ENCODE measurements at regions of chr5 and their contacts with region 1.

Region 1: DNA sequence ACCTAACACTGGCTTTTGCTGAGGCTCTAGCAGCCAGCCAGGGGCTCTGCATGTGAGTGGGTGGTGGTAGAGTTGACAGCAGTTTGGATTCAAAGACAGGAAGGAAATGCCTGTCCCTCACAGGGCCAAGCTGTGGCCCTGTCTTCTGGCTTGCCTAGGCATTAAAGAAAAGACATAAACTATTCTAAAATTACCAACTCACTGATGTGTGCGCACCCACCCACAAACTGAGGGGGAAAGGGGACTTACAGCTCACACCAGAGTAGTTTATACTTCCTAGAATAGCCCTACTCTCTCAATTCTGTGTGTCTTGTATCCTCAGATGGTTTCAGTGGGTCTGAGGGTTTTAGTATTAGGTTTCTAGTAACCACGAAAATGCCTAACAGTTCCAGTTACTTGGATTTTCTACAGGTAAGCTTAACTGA is 18.3 kb upstream of the IL13 start:
- DNase-seq: peak; percentile 52
- H3K4me3 Mint-ChIP-seq: no peak overlapping the region
- H3K27ac Mint-ChIP-seq: peak overlapping the region; percentile 18
- H3K4me1 Mint-ChIP-seq: peaks cover 76% of the 10 kb centered on the region
- H3K27me3 Mint-ChIP-seq: no peaks in the 10 kb centered on the region

Region 2: DNA sequence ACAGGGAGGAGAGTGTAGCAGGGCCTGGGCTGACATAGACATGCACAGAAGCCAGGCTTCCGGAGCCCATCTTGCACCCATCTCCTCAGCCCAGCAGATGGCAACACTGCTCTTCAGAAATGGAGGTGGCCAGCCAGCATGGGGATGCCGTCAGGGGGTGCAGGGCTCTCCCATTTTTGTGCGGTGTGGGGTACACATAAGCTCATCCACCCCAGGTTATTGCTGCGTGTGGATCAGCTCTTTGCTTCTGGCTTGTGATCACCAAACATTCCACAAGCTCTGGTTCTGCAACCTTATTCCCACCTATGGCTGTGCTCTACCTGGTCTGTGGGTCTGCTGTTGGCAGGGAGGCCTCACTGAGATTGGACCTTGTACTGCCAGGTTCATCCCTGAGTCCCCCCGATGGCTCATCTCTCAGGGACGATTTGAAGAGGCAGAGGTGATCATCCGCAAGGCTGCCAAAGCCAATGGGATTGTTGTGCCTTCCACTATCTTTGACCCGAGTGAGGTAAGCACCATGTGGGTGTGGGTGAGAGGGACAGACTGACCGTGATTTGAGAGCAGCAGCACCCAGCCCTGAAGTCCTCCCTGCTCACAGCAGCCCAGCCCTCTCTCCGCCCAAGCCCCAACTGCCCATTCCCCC is 253.0 kb before region 1 on chr5:
- CTCF ChIA-PET with region 1: interaction called, 4 read pairs
- POLR2A ChIA-PET with region 1: no interaction called
- intact Hi-C with region 1: loop called (anchors 5 kb)
- DNase-seq: peak; percentile 87
- H3K4me3 Mint-ChIP-seq: no peak overlapping the region
- H3K27ac Mint-ChIP-seq: peak overlapping the region; percentile 14
- H3K4me1 Mint-ChIP-seq: peaks cover 42% of the 10 kb centered on the region
- H3K27me3 Mint-ChIP-seq: no peaks in the 10 kb centered on the region

Region 3: DNA sequence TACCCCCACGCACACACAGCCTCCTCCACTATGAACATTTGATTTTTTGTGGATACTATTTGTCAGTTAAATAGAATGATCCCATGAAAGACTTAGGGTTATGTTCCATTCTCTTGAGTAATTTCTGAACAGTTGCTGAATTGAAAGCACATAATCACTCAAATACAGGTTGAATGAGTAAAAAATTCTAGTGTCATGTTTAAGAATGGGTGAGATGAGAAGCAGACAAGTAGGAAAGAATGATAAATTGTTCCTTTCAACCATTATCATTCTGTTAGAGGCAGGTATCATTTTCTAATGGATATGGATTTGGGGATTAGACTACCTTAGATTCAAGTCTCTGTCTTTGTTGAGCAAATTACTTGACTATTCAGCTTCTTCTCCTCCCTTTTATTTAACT is 63.6 kb before region 1 on chr5:
- CTCF ChIA-PET with region 1: no interaction called
- POLR2A ChIA-PET with region 1: no interaction called
- intact Hi-C with region 1: loop called (anchors 5 kb)
- DNase-seq: no peak
- H3K4me3 Mint-ChIP-seq: no peak overlapping the region
- H3K27ac Mint-ChIP-seq: peak overlapping the region; percentile 9
- H3K4me1 Mint-ChIP-seq: peaks cover 34% of the 10 kb centered on the region
- H3K27me3 Mint-ChIP-seq: no peaks in the 10 kb centered on the region

Region 4: DNA sequence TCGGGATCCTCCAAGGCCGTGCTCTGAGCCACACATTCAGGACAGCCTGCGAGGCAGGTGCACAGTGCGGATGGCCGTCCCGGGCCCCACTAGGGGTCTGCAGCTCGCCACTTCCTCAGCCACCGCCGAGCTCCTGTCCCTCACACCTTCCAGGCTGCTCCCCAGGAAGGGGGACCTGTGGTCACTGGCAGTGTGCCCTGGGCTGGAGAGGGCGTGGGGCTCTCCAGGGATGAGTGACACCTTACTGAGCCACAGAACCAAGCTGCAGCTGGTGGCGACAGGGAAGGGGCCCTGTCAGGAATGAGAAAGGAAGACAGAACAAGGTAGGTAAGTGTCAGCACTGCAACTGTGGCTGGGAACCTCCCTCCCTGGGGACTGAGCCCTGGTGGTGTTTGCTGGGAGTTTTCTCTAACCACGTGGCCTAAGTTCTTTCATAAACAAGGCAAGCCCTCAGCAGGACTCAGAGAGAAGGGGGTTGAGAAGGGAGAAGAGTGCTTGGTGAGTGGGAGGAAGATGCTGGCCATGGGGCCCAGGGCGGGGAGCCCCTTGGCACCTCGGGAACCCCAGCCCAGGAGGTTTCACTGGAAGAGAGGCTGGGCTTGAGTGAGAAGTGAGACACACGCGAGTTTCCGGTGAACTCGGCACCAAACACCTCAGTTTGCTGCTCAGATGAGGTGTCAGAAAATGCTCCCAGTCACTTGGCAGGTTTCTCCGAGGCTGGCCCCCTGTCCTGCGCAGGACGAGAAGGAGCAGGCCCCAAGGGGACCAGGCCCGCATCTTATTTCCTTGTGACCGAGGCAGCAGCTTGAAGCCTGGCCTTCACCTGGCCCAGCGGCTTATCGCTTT is 23.4 kb after region 1 on chr5:
- CTCF ChIA-PET with region 1: interaction called, 6 read pairs
- POLR2A ChIA-PET with region 1: interaction called, 14 read pairs
- intact Hi-C with region 1: loop called (anchors 1 kb)
- DNase-seq: peak; percentile 86
- H3K4me3 Mint-ChIP-seq: no peak overlapping the region
- H3K27ac Mint-ChIP-seq: peak overlapping the region; percentile 90
- H3K4me1 Mint-ChIP-seq: peaks cover 46% of the 10 kb centered on the region
- H3K27me3 Mint-ChIP-seq: peaks cover under 1% of the 10 kb centered on the region

Region 5: DNA sequence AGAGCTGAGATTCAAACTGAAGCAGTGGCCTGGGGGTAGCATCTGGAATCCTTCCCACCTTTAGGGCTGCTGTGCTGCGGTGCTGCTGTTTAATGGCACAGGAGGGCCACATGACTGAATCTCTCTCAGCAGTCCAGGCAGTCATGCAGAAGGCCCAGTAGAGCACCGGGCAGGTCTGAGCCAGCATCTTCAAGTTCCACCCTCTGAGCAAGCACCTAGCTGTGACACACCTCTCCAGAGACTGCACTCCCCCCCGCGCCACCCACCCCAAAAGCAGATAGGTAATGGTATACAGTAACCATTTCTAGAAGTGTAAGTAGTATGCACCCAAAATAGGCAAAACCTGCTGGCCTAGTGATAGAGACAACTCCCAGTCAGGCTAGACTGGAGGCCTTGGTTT is 42.3 kb after region 1 on chr5:
- CTCF ChIA-PET with region 1: no interaction called
- POLR2A ChIA-PET with region 1: no interaction called
- intact Hi-C with region 1: no loop called
- DNase-seq: no peak
- H3K4me3 Mint-ChIP-seq: no peak overlapping the region
- H3K27ac Mint-ChIP-seq: no peak overlapping the region
- H3K4me1 Mint-ChIP-seq: peaks cover 11% of the 10 kb centered on the region
- H3K27me3 Mint-ChIP-seq: no peaks in the 10 kb centered on the region

Region 6: DNA sequence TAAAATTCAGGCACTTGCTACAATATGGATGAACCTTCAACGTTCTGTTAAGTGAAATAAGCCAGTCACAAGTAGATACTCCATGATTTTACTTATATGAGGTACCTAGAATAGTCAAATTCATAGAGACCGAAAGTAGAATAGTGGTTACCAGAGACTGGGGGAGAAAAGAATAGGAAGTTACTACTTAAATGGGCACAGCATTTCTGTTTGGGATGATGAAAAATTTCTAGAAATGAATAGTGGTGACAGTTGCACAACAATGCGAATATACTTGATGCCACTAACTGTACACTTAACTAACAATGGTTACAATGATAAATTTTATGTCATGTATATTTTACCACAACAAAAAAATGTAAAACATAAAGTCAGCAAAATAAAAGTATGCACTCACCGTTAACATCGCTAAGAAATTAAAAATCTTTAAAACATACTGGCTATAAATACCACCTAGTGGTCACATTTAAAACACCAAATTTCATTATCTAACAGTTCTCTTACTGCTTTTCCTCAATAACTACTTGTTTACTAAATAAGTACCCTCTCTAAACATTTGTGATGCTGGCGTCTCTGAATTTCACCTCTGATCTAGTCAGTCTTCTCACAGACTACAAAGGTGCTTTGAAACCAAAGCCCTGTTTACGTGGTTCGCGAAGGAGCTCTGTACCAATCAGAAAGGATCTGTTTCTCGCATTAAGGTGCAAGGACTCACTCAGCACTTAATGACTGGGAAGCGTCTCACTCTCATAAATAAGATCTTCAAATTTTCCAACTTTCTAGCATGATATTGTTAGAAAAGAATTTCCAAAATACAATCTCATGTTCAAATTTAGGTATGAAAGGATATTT is 75.0 kb after region 1 on chr5:
- CTCF ChIA-PET with region 1: interaction called, 6 read pairs
- POLR2A ChIA-PET with region 1: no interaction called
- intact Hi-C with region 1: loop called (anchors 1 kb)
- DNase-seq: no peak
- H3K4me3 Mint-ChIP-seq: no peak overlapping the region
- H3K27ac Mint-ChIP-seq: no peak overlapping the region
- H3K4me1 Mint-ChIP-seq: peaks cover 14% of the 10 kb centered on the region
- H3K27me3 Mint-ChIP-seq: no peaks in the 10 kb centered on the region

Measured in activated CD4-positive, alpha-beta memory T cell treated with anti-CD3 and anti-CD28 coated beads for 36 hours (primary cell).